GM12878 (cell line): ENCODE measurements at regions of chr4 and their contacts with region 1.

Region 1: DNA sequence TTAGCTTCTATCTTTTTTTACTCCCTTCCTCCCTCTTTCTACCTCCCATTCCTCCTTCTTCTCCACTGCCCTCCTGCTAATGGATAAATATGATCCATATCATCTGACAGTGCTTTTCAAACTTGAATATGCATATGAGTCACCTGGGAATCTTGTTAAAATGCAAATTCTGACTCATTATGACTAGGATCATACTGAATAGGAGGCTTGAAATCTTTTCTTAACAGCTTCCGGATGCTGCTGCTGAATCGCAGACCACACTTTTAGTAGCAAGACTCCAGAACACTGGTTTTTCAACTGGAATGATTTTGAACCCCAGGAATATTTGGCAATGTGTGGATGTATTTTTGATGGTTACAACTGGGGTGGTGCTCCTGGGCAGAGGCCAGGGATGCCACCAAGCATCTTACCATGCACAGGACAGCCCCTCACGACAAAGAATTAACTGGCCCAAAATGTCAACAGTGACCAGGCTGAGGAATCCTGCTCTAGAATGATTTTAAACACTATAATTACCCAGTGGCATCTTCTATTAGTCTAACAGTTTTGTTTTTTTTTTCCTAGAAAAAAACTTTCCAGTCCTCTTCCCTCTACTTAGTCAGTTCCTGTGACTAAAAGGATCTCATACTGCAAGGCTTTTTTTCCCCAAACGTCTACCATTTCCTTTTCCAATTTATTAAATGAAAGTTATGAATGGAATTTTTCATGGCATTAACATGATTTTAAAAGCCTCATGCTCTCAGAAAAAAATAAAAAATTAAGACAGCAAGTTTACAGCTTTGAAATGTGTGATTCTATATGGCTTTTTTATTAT is 10.6 kb upstream of the PYURF start:
- DNase-seq: no peak
- ATAC-seq: no peak
- H3K4me3 ChIP-seq: no peak overlapping the region
- H3K27ac ChIP-seq: no peak overlapping the region
- H3K4me1 ChIP-seq: no peaks in the 10 kb centered on the region
- H3K27me3 ChIP-seq: no peaks in the 10 kb centered on the region
- CTCF ChIP-seq: no peak
- EP300 ChIP-seq: no peak
- POLR2A ChIP-seq: no peak
- RAD21 ChIP-seq: no peak

Region 2: DNA sequence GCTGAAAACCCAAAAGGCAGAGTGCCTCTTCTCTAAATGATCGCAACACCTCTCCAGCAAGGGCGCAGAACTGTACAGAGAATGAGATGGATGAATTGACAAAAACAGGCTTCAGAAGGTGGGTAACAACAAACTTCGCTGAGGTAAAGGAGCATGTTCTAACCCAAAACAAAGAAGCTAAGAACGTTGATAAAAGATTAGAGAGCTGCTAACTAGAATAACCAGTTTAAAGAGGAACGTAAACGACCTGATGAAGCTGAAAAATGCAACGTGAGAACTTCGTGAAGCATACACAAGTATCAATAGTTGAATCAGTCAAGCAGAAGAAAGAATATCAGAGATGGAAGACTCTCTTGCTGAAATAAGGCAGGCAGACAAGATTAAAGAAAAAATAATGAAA is 100.9 kb after region 1 on chr4:
- CTCF ChIA-PET with region 1: interaction called, 10 read pairs
- POLR2A ChIA-PET with region 1: no interaction called
- RAD21 ChIA-PET with region 1: no interaction called
- SMC1A ChIA-PET with region 1: no interaction called
- in situ Hi-C with region 1: no loop called
- intact Hi-C with region 1: no loop called
- DNase-seq: no peak
- ATAC-seq: no peak
- H3K4me3 ChIP-seq: no peak overlapping the region
- H3K27ac ChIP-seq: no peak overlapping the region
- H3K4me1 ChIP-seq: no peaks in the 10 kb centered on the region
- H3K27me3 ChIP-seq: no peaks in the 10 kb centered on the region
- CTCF ChIP-seq: no peak
- EP300 ChIP-seq: no peak
- POLR2A ChIP-seq: no peak
- RAD21 ChIP-seq: no peak

Region 3: DNA sequence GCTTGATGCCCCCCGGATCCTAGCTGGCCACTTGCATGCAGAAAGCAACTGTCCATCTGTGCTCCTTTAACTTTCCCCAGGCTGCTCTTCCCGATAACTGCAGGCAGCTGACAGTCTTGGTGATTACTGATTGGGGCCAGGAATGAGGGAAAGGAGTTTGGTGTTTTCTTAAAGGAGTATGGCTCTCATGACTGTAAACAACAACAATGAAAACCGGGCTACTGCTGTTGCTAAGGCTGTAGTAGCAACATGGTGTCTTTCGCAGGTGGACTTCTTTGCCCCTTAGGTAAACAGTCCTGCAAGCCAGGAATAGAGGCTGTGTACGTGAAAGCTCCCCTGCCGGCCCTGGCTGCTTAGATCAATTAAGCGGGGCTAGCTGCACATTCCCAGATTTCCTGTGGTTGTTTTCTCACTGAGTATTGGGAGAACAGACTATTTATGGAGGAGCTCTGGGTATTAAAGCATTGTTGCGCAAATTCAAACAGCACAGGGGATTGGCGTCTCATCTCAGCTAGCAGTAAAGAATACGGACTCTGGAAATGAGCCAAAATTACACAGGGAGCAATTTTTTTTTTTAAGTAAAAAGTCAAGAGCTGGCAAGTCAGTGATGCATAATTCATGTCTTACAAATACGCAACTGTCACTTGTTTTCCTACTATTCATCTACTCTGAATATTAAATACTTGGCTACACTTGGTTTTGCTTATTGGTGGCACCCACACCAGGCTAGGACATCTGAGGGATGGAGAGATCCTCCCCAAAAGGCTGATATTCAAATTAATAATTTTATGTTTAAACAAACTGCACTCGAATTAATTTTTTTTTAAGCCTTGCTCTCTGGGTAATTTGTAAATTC is 225.1 kb after region 1 on chr4:
- CTCF ChIA-PET with region 1: no interaction called
- POLR2A ChIA-PET with region 1: no interaction called
- RAD21 ChIA-PET with region 1: no interaction called
- SMC1A ChIA-PET with region 1: no interaction called
- in situ Hi-C with region 1: no loop called
- intact Hi-C with region 1: no loop called
- DNase-seq: no peak
- ATAC-seq: no peak
- H3K4me3 ChIP-seq: no peak overlapping the region
- H3K27ac ChIP-seq: no peak overlapping the region
- H3K4me1 ChIP-seq: no peaks in the 10 kb centered on the region
- H3K27me3 ChIP-seq: no peaks in the 10 kb centered on the region; a peak in 2 of 4 replicates
- CTCF ChIP-seq: no peak
- EP300 ChIP-seq: no peak
- POLR2A ChIP-seq: no peak
- RAD21 ChIP-seq: no peak